Right ventricle myocardium inferior (tissue), 1 donor: ENCODE measurements at regions of chr11 and their contacts with region 1.

Region 1: GRCh38 chr11:47407746-47408590 is at the start of gene SLC39A13:
- DNase-seq: peak; percentile 97
- ATAC-seq: peak; percentile 94
- total RNA-seq, gene SLC39A13: 35.0 TPM

Region 2: DNA sequence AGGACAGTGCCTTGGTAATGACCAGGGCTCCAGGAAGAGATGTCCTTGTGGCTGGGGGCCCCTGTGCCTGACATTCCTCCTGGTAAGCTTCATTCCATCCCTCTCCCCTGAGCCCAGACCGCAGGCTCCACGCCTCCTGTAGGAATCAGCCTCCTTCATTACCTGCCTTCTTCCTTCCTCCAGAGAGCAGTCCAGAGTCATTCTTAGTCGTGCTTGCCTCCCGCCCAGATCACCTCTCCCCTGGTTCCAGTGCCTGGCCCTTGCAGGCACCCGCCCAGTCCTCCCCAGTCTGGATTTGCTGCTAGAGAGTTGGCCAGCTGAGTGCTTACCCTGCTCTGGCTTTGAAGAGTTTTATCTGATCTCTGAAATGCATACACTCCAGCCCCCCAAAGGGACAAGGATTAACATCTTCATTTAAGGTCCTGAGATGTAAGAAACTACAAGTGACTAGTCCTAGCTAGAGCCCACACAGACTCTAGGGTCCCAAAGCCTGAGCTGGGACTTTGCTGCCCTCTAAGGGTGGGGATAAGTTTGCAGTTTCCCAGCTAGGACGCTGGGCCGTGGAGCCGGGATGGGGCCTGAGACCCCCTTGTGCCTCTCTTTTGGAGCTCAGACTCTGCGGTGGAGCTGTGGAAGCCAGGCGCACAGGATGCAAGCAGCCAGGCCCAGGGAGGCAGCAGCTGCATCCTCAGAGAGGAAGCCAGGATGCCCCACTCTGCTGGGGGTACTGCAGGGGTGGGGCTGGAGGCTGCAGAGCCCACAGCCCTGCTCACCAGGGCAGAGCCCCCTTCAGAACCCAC is 148.6 kb before region 1 on chr11:
- intact Hi-C with region 1: loop called (anchors 5 kb)
- DNase-seq: no peak
- ATAC-seq: no peak

Region 3: DNA sequence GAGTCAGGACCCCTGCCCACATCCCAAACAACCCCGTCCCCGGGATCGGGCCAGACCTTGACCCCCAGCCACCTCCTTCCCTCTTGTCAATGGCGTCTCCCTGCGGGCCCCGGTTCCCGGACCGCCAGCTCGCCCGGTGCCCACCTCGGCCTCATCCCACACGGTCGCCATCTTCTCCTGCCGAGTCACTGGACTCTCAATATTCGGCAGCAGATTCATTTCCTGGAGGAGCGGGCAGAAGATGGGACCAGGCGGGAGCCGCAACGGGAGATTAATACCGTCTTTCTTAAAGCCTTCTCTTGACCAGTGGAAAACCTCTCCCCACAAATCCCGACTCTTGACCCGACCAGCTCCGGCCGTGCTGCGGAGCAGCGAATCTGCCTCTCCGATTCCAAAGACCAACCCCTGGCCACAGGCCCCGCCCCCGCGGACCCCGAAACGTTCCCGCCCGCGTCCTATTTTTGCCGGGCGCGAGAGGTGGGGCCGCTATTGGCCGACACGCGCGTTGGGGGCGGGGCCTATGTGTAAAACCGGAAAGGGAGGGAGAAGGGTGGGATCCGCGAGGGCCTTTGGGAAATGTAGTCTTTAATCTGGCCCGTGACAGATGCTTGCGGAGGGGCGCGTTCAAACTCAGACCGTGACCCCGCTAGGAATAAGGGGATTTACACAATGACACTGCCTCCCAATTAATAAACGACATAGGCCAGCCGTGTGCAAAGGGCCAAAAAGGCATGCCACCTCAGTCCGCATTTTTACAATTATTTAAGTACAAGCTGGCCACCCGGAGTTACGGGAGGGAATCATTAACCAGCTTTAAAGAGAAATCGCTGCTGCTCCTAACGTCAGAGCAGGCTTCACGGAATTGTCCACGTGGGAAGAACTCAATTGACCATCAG is 18.3 kb after region 1 on chr11 and contains the start of gene PSMC3:
- intact Hi-C with region 1: loop called (anchors 1 kb)
- DNase-seq: peak; percentile 99
- ATAC-seq: peak; percentile 98
- total RNA-seq, gene PSMC3: 160 TPM